CD14-positive monocyte (primary cell): ENCODE measurements at regions of chr20 and their contacts with region 1.

Region 1: DNA sequence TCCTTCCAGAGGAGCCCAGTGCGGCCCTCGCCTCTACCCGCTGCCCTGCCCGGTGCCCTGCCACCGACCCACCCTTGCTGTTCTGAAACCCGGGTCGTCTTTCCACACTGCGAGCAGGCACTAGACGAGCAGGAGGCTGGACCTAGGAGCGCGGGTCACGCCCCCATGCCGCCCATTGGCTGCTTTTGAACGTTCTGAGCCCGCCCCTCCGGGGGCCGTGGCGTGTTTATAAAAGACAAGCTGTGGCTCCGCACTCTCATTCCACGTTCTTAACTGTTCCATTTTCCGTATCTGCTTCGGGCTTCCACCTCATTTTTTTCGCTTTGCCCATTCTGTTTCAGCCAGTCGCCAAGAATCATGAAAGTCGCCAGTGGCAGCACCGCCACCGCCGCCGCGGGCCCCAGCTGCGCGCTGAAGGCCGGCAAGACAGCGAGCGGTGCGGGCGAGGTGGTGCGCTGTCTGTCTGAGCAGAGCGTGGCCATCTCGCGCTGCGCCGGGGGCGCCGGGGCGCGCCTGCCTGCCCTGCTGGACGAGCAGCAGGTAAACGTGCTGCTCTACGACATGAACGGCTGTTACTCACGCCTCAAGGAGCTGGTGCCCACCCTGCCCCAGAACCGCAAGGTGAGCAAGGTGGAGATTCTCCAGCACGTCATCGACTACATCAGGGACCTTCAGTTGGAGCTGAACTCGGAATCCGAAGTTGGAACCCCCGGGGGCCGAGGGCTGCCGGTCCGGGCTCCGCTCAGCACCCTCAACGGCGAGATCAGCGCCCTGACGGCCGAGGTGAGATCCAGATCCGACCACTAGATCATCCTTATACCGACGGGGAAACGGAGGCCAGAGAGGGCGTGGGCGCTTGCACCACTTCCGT is at the start of gene ID1:
- DNase-seq: peak; percentile 87 to 94 (median 91)
- H3K4me3 ChIP-seq: peak within 1 kb of the TSS; percentile 57 to 83 (median 60)
- H3K4me3 Mint-ChIP-seq: peak within 1 kb of the TSS; percentile 95 to 97
- H3K27ac ChIP-seq: peak within 1 kb of the TSS in 1 of 2 donors; percentile 45
- H3K27ac Mint-ChIP-seq: peak within 1 kb of the TSS; percentile 83 to 95 (median 90)
- H3K4me1 ChIP-seq: peaks cover 49 to 66% of the 10 kb centered on the region in 2 donors
- H3K4me1 Mint-ChIP-seq: peaks cover 48% of the 10 kb centered on the region
- H3K27me3 ChIP-seq: peaks cover 8 to 34% of the 10 kb centered on the region in 2 donors
- H3K27me3 Mint-ChIP-seq: peaks cover 26 to 50% (median 32%) of the 10 kb centered on the region in 3 donors
- CTCF ChIP-seq: no peak
- polyA plus RNA-seq, gene ID1: 3.9 to 129 (median 12.5) TPM

Region 2: DNA sequence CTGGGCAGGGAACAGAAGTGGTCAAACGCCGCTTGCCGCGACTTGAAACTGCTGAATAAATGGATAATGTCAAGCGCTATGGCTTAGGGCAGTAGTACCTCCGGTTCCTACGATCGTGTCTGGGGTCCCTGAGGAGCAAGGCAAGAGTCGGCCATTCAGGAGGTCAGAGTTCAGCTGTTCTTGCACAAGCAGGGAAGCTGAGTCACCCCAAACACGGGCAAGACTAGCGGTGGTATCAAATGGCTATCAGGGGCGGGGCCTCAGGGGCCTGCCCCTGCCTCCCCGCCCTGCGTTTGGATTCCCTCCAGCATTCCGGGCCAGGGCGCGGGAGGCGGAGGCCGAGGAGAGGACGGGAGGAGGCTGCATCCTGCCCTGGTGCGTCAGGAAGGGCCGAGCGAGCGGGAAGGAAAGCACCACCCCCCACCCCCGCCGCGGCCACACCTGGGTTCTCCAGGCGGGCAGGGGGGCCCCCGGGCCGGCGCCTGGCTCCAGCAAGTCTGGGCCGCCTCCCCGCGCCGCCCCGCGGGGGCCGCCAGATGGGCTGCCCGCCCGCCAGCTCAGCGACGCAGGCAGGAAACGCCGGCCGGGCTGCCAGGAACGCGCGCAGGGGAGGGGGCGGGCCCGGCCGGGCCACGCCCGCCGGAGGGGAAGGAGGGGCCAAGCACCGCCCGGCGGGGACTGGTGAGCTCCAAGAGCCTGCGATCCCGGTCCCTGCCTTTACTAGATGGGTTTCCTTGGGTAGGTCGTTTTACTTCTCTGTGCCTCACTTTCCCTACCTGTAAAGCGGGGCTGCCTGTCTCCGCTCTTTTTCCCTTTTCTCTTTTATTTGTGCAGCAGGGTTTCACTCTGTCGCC is 32.3 kb before region 1 on chr20:
- intact Hi-C with region 1: loop called (anchors 2 kb)
- DNase-seq: peak; percentile 92 to 95 (median 93)
- H3K4me3 ChIP-seq: peak overlapping the region; percentile 47 to 85 (median 60)
- H3K4me3 Mint-ChIP-seq: peak overlapping the region; percentile 87 to 94
- H3K27ac ChIP-seq: peak overlapping the region; percentile 83 to 86
- H3K27ac Mint-ChIP-seq: peak overlapping the region; percentile 94 to 97 (median 96)
- H3K4me1 ChIP-seq: peaks cover 15 to 20% of the 10 kb centered on the region in 2 donors
- H3K4me1 Mint-ChIP-seq: peaks cover 28% of the 10 kb centered on the region
- H3K27me3 ChIP-seq: no peaks in the 10 kb centered on the region
- H3K27me3 Mint-ChIP-seq: no peaks in the 10 kb centered on the region
- CTCF ChIP-seq: no peak